A549 (cell line): ENCODE measurements at regions of chr16 and their contacts with region 1.

Region 1: GRCh38 chr16:87342978-87343752 is 26.0 kb upstream of the C16orf95 start:
- DNase-seq: no peak
- ATAC-seq: no peak
- H3K4me3 ChIP-seq: no peak overlapping the region
- H3K27ac ChIP-seq: no peak overlapping the region
- H3K4me1 ChIP-seq: no peaks in the 10 kb centered on the region
- CTCF ChIP-seq: no peak
- EP300 ChIP-seq: no peak
- POLR2A ChIP-seq: no peak
- RAD21 ChIP-seq: no peak

Region 2: GRCh38 chr16:87332150-87332549 is 11.0 kb before region 1 on chr16:
- CTCF ChIA-PET with region 1: interaction called, 11 read pairs
- POLR2A ChIA-PET with region 1: no interaction called
- DNase-seq: no peak
- ATAC-seq: no peak
- H3K4me3 ChIP-seq: no peak overlapping the region
- H3K27ac ChIP-seq: no peak overlapping the region
- H3K4me1 ChIP-seq: no peaks in the 10 kb centered on the region
- CTCF ChIP-seq: no peak
- EP300 ChIP-seq: no peak
- POLR2A ChIP-seq: no peak
- RAD21 ChIP-seq: no peak

Region 3: GRCh38 chr16:87368029-87368770 is 25.0 kb after region 1 on chr16:
- CTCF ChIA-PET with region 1: no interaction called
- POLR2A ChIA-PET with region 1: no interaction called
- DNase-seq: no peak
- ATAC-seq: no peak
- H3K4me3 ChIP-seq: no peak overlapping the region
- H3K27ac ChIP-seq: no peak overlapping the region
- H3K4me1 ChIP-seq: no peaks in the 10 kb centered on the region
- CTCF ChIP-seq: no peak
- EP300 ChIP-seq: no peak
- POLR2A ChIP-seq: no peak
- RAD21 ChIP-seq: no peak